Breast epithelium (tissue), 4 donors: ENCODE measurements at regions of chr11 and their contacts with region 1.

Region 1: DNA sequence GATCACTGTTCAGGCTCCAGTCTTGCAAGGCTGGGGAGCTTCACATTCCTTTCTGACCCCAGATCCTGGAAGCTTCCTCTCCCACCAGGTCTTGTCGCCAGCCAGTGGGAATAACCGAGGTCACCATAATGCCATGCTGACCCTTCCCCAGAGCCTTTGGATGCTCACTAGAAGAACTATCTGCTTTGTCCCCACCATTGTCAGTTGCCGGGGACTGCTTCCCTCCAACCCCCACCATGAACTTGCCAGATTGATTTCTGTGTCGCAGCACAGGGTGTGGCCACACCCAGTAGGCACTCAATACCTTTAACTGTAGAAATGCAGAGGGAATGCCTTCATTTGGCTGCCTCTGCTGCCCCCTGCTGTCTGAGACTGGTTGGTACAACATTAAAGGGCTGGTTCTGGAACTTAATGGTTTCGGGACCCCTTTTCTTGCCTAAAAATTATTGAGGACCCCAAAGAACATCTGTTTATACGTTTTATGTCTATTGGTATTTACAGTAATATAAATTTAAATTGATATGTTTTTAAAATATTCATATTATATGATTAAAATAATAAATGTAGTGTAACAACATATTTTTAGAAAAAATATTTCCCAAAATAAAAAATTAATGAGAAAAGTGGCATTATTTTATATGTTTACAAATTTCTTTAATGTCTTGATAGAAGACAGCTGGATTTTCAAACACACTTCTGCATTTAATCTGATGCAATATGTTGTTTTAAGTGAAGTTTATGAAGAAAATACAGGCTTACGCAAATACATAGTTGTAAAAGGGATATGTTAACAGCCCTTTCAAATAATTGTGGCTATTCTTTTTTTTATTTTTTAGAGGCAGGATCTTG is 6.7 kb upstream of the GDPD5 start:
- DNase-seq: peak; percentile 41 to 64
- H3K4me3 ChIP-seq: no peak overlapping the region
- H3K27ac ChIP-seq: no peak overlapping the region
- H3K4me1 ChIP-seq: no peaks in the 10 kb centered on the region
- H3K27me3 ChIP-seq: no peaks in the 10 kb centered on the region
- CTCF ChIP-seq: peak; percentile 84 to 96 (median 94)
- POLR2A ChIP-seq: no peak

Region 2: DNA sequence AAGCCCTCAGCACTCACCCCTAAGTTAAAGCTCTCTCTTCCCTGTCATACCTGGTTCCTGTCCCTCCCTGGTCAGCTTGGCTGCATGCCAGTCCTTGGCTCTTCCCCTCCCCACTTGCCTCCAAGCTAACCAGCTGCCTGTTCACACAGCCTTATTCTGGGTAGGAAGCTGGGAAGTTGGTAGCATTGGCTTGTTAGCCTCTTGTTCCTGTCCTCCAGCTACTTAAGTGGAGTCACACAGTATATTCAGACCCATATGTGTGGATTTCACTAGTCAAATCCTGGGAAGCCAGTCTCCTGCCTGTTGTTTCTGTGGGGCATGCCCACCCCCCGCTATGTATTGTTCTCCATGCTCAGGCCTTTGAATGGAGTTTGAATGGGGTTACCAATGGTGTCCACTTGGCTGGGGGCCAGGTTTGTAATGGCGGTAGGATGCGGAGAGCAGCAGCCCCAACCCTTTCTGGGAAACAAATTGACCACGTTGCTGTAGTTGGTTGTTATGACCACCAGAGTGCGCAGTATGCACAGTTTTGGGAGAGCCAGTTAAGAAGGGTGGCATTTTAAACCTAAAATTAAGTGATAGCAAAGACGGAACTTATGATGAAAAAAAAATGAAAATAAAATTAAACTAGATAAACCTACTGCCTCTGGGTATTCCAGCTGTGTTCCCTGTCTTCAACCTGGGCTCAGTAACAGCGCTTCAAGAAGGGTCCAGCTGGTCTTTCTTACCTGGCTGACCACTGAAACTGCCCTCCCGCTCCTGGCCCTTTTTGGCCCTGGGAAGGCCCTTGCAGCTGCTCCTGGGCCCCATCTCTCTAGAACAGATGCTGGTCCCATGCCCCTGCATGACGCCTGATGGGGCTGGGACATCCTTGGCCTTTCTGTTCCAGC is 143.8 kb before region 1 on chr11:
- intact Hi-C with region 1: loop called (anchors 5 kb)
- DNase-seq: peak in 1 of 2 donors; percentile 48
- H3K4me3 ChIP-seq: no peak overlapping the region
- H3K27ac ChIP-seq: peak overlapping the region in 1 of 2 donors; percentile 70
- H3K4me1 ChIP-seq: peaks cover 0 to 4% of the 10 kb centered on the region in 2 donors
- H3K27me3 ChIP-seq: no peaks in the 10 kb centered on the region
- CTCF ChIP-seq: peak; percentile 77 to 83 (median 82)
- POLR2A ChIP-seq: no peak

Region 3: DNA sequence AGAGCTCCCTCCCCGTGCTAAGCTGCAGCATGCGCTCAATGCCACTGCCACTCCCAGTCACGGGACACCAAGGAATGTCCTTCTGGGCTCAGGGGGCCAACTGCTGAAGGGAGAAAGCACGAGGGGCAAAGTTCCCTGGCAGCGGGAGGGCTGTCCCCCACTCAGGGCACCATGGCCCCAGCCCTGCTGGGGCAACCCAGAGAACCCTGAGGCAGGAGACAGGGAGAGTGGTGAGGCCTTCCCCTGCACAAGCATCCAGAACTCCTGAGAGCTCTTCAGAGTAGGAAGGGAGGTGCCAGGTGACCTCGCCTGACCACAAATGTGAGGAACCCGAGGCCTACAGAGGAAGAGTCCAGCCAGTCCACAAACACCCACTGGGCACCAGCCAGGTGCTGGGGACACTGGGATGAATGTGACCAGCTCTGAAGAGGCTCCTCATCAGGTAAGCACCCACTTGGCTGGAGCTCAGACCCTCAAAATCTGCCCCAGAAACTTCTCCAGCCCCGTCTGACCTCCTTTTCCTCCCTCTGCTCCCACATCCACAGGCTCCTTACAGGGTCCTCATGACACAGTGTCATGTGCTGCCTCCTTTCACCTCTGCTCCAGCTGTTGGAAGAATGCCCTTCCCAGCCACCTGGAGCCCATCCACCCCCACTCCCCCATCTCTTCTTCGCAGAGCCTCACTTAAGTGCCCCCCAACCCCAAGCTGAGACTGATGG is 22.3 kb before region 1 on chr11:
- intact Hi-C with region 1: loop called (anchors 1 kb)
- DNase-seq: no peak
- H3K4me3 ChIP-seq: no peak overlapping the region
- H3K27ac ChIP-seq: peak overlapping the region; percentile 26 to 76
- H3K4me1 ChIP-seq: no peaks in the 10 kb centered on the region
- H3K27me3 ChIP-seq: no peaks in the 10 kb centered on the region
- CTCF ChIP-seq: no peak
- POLR2A ChIP-seq: no peak

Region 4: GRCh38 chr11:75554258-75555022 is 22.0 kb after region 1 on chr11:
- intact Hi-C with region 1: no loop called
- DNase-seq: peak; percentile 64 to 70
- H3K4me3 ChIP-seq: peak overlapping the region; percentile 23 to 53 (median 30)
- H3K27ac ChIP-seq: peak overlapping the region; percentile 68 to 90
- H3K4me1 ChIP-seq: peaks cover 14 to 21% of the 10 kb centered on the region in 2 donors
- H3K27me3 ChIP-seq: no peaks in the 10 kb centered on the region
- CTCF ChIP-seq: no peak
- POLR2A ChIP-seq: no peak